ENCODE measurements at regions of chr13 and their contacts with region 1.

Region 1: DNA sequence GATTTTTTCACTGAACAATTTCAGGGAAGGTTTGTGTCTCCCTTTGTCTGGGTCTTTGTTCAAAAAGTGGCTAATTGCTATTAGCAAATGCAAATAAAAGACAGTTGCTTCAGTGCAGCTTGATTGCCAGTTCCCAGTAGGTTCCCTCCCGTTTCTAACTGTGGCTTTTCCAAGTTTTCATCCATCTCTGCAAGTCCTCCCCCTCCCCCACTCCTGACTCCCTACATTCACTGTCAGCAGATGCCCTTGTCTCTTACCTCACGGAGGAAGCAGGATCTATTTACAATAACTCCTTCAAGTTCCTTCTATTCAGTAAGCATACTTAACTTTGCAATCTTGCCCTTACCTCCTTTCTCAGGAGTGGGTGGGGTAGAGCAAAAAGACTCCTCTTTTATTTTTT is 55.4 kb upstream of the SCEL start:
- DNase-seq: no peak
- ATAC-seq: no peak
- H3K4me3 Mint-ChIP-seq: no peak overlapping the region
- H3K27ac Mint-ChIP-seq: no peak overlapping the region
- H3K4me1 Mint-ChIP-seq: peaks cover 13% of the 10 kb centered on the region
- H3K27me3 Mint-ChIP-seq: no peaks in the 10 kb centered on the region
- CTCF ChIP-seq: no peak

Region 2: GRCh38 chr13:77184455-77184854 is 295.6 kb before region 1 on chr13:
- CTCF ChIA-PET with region 1: interaction called, 4 read pairs
- POLR2A ChIA-PET with region 1: interaction called, 8 read pairs
- intact Hi-C with region 1: loop called (anchors 1 kb)
- DNase-seq: peak; percentile 23
- ATAC-seq: peak; percentile 97
- H3K4me3 Mint-ChIP-seq: peak overlapping the region; percentile 61
- H3K27ac Mint-ChIP-seq: peak overlapping the region; percentile 95
- H3K4me1 Mint-ChIP-seq: peaks cover 28% of the 10 kb centered on the region
- H3K27me3 Mint-ChIP-seq: no peaks in the 10 kb centered on the region
- CTCF ChIP-seq: no peak

Region 3: GRCh38 chr13:77291774-77292173 is 188.3 kb before region 1 on chr13:
- CTCF ChIA-PET with region 1: interaction called, 9 read pairs
- POLR2A ChIA-PET with region 1: interaction called, 8 read pairs
- intact Hi-C with region 1: loop called (anchors 1 kb)
- DNase-seq: no peak
- ATAC-seq: no peak
- H3K4me3 Mint-ChIP-seq: no peak overlapping the region
- H3K27ac Mint-ChIP-seq: peak overlapping the region; percentile 76
- H3K4me1 Mint-ChIP-seq: peaks cover 47% of the 10 kb centered on the region
- H3K27me3 Mint-ChIP-seq: no peaks in the 10 kb centered on the region
- CTCF ChIP-seq: no peak

Region 4: GRCh38 chr13:77329133-77329910 is 150.7 kb before region 1 on chr13:
- CTCF ChIA-PET with region 1: interaction called, 95 read pairs
- POLR2A ChIA-PET with region 1: interaction called, 142 read pairs
- intact Hi-C with region 1: loop called (anchors 1 kb)
- DNase-seq: peak; percentile 79
- ATAC-seq: peak; percentile 65
- H3K4me3 Mint-ChIP-seq: peak overlapping the region; percentile 98
- H3K27ac Mint-ChIP-seq: peak overlapping the region; percentile 98
- H3K4me1 Mint-ChIP-seq: peaks cover 53% of the 10 kb centered on the region
- H3K27me3 Mint-ChIP-seq: no peaks in the 10 kb centered on the region
- CTCF ChIP-seq: no peak

Region 5: DNA sequence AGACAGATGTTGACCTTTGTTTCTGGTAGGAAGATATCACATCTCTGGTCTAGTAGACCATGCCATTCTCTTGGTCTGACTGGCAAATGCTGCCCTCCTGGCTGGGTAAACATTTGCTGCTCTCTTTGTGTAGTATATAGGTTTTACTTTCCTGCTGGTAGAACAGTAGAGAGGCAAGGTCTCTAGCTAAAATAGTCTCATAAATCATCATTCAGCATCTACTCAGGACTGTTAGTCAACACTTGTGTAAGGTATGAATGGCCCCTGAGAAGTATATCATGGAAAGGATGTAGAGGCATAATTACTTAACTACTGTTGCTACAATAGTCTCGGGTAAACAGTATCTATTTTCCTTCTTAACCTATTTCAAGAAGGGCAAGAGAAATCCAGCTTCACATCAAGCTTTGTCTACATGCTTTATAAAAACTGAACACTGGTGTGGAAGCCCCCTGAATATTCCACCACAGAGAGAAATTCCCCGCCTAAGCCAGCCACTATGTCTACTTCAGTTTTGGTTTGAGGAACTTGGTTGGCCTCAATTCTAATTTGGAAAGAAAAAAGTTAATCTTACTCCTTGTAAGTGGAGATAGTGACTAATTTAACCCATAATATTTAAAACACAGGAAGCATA is 134.8 kb before region 1 on chr13:
- CTCF ChIA-PET with region 1: interaction called, 3 read pairs
- POLR2A ChIA-PET with region 1: interaction called, 5 read pairs
- intact Hi-C with region 1: loop called (anchors 1 kb)
- DNase-seq: no peak
- ATAC-seq: peak; percentile 77
- H3K4me3 Mint-ChIP-seq: peak overlapping the region; percentile 21
- H3K27ac Mint-ChIP-seq: peak overlapping the region; percentile 86
- H3K4me1 Mint-ChIP-seq: peaks cover 55% of the 10 kb centered on the region
- H3K27me3 Mint-ChIP-seq: no peaks in the 10 kb centered on the region
- CTCF ChIP-seq: no peak

Region 6: GRCh38 chr13:77429320-77430142 is 50.5 kb before region 1 on chr13:
- CTCF ChIA-PET with region 1: interaction called, 12 read pairs
- POLR2A ChIA-PET with region 1: interaction called, 20 read pairs
- intact Hi-C with region 1: loop called (anchors 1 kb)
- DNase-seq: peak; percentile 22
- ATAC-seq: peak; percentile 91
- H3K4me3 Mint-ChIP-seq: peak overlapping the region; percentile 75
- H3K27ac Mint-ChIP-seq: peak overlapping the region; percentile 99
- H3K4me1 Mint-ChIP-seq: peaks cover 44% of the 10 kb centered on the region
- H3K27me3 Mint-ChIP-seq: no peaks in the 10 kb centered on the region
- CTCF ChIP-seq: no peak

Region 7: GRCh38 chr13:77492982-77493381 is 12.9 kb after region 1 on chr13:
- CTCF ChIA-PET with region 1: interaction called, 22 read pairs
- POLR2A ChIA-PET with region 1: no interaction called
- intact Hi-C with region 1: no loop called
- DNase-seq: no peak
- ATAC-seq: peak; percentile 79
- H3K4me3 Mint-ChIP-seq: no peak overlapping the region
- H3K27ac Mint-ChIP-seq: no peak overlapping the region
- H3K4me1 Mint-ChIP-seq: no peaks in the 10 kb centered on the region
- H3K27me3 Mint-ChIP-seq: peaks cover 3% of the 10 kb centered on the region
- CTCF ChIP-seq: no peak

Region 8: GRCh38 chr13:77533875-77534788 is 54.1 kb after region 1 on chr13:
- CTCF ChIA-PET with region 1: no interaction called
- POLR2A ChIA-PET with region 1: no interaction called
- intact Hi-C with region 1: no loop called
- DNase-seq: no peak
- ATAC-seq: no peak
- H3K4me3 Mint-ChIP-seq: no peak overlapping the region
- H3K27ac Mint-ChIP-seq: no peak overlapping the region
- H3K4me1 Mint-ChIP-seq: no peaks in the 10 kb centered on the region
- H3K27me3 Mint-ChIP-seq: peaks cover 5% of the 10 kb centered on the region
- CTCF ChIP-seq: no peak

Measured in activated B cell treated with CpG ODN at 0.5 μM for 24 hours (primary cell).